ENCODE measurements at regions of chr10 and their contacts with region 1.

Region 1: GRCh38 chr10:13659897-13660550 is 73.3 kb downstream of the PRPF18 start:
- DNase-seq: peak; percentile 59 to 78 (median 68)
- ATAC-seq: peak; percentile 78
- H3K4me3 ChIP-seq: no peak overlapping the region
- H3K4me1 ChIP-seq: no peaks in the 10 kb centered on the region
- CTCF ChIP-seq: peak; percentile 77

Region 2: GRCh38 chr10:13776861-13777311 is 116.9 kb after region 1 on chr10:
- intact Hi-C with region 1: loop called (anchors 5 kb)
- DNase-seq: no peak
- ATAC-seq: no peak
- H3K4me3 ChIP-seq: no peak overlapping the region
- H3K4me1 ChIP-seq: no peaks in the 10 kb centered on the region
- CTCF ChIP-seq: no peak